Sciatic nerve (tissue), 2 donors: ENCODE measurements at regions of chr2 and their contacts with region 1.

Region 1: DNA sequence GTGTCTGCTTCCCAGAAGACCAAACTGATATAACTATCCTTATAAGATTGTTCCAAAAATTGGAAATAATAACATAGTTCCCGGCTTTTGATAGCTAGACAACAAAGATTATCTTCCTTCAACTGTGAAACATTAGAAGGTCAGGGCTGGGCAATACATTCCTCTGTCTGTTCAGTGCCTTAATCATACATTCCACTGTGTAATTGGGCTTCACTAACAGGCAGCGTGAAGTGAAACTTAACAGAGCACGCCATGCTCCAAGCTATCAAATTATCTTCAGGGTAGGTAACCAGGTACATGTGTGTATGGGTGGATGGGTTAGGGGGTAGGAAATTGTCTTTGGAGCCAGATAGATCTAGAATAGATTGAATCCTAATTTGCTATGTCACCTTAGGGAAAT is 23.5 kb upstream of the ARL5A start:
- DNase-seq: no peak
- ATAC-seq: peak; percentile 33

Region 2: DNA sequence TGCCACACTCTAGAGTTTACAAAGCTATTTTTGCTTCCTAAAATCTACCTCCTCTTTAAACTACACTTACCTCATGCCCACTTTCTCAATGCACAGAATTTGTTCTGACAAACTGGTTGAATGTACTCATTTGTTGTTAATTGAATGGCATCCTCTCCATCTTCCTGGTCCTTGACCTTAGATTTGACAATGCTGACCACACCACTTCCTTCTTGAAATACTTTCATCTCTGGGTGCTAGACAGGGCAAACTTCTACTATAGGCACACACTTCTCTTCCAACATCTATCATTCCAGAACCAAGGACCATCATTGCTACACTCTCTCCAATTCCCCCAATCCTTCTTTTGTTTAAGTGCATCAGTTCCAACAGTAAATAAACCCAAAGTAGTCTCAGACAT is 45.8 kb before region 1 on chr2:
- intact Hi-C with region 1: loop called (anchors 2 kb)
- DNase-seq: no peak
- ATAC-seq: no peak

Region 3: GRCh38 chr2:151869291-151869690 is 17.5 kb after region 1 on chr2:
- intact Hi-C with region 1: no loop called
- DNase-seq: no peak
- ATAC-seq: no peak

Region 4: GRCh38 chr2:151886241-151886640 is 34.5 kb after region 1 on chr2:
- intact Hi-C with region 1: no loop called
- DNase-seq: no peak
- ATAC-seq: no peak

Region 5: GRCh38 chr2:152240559-152241231 is 388.9 kb after region 1 on chr2:
- intact Hi-C with region 1: no loop called
- DNase-seq: no peak
- ATAC-seq: no peak